ENCODE measurements at regions of chr14 and their contacts with region 1.

Region 1: DNA sequence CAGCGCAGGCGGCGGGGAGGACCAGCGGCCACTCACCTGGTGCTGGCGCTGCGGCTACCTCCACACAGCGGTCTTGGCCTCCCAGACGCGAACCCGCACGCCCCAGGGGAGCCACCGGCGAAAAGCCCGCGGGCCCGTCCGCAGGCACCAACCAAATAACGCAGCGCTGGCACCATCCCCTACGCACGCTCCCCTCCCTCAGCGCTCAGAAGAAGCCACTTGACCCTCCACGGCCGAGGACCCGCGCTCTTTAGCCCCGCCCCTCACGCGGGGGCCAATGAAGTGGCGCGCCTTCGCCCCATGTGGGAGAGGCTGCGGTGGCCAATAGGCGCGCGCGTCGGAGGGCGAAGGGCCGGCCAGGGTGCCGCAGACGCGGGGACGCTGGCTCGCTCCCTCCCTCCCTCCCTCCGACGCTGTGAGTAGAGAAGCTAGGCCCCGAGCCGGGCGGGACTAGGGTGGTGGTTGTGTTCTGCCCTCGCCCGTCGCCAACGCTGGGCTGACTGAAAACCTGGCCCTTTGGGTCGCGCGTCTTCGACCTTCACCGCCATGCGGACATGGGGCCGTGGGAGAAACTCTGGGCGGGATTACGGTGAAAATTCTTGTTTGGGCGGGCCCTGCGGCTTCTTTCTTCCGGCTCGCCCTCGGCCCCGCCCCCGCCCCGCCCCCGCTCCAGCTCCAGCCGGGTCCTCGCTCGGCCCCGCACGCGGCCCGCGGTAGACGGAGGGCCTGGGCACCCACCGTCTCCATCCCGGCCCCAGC is at the starts of genes DMAC2L and L2HGDH:
- DNase-seq: peak; percentile 91
- ATAC-seq: peak; percentile 96
- H3K4me3 Mint-ChIP-seq: peak within 1 kb of the TSS; percentile 88
- H3K27ac Mint-ChIP-seq: peak within 1 kb of the TSS; percentile 98
- H3K4me1 Mint-ChIP-seq: peaks cover 35% of the 10 kb centered on the region
- H3K27me3 Mint-ChIP-seq: no peaks in the 10 kb centered on the region
- CTCF ChIP-seq: peak; percentile 11
- total RNA-seq, gene DMAC2L: 15.5 to 17.6 TPM
- total RNA-seq, gene L2HGDH: 18.4 to 18.8 TPM

Region 2: GRCh38 chr14:50231475-50232275 is 80.5 kb before region 1 on chr14 and contains the start of gene SOS2:
- CTCF ChIA-PET with region 1: no interaction called
- POLR2A ChIA-PET with region 1: interaction called, 4 read pairs
- intact Hi-C with region 1: loop called (anchors 5 kb)
- DNase-seq: peak; percentile 81
- ATAC-seq: peak; percentile 77
- H3K4me3 Mint-ChIP-seq: peak within 1 kb of the TSS; percentile 84
- H3K27ac Mint-ChIP-seq: peak within 1 kb of the TSS; percentile 91
- H3K4me1 Mint-ChIP-seq: peaks cover 33% of the 10 kb centered on the region
- H3K27me3 Mint-ChIP-seq: no peaks in the 10 kb centered on the region
- CTCF ChIP-seq: no peak
- total RNA-seq, gene SOS2: 14.7 to 16.4 TPM

Measured in activated CD8-positive, alpha-beta T cell treated with anti-CD3 and anti-CD28 coated beads for 36 hours (primary cell).